ENCODE measurements at regions of chr21 and their contacts with region 1.

Region 1: DNA sequence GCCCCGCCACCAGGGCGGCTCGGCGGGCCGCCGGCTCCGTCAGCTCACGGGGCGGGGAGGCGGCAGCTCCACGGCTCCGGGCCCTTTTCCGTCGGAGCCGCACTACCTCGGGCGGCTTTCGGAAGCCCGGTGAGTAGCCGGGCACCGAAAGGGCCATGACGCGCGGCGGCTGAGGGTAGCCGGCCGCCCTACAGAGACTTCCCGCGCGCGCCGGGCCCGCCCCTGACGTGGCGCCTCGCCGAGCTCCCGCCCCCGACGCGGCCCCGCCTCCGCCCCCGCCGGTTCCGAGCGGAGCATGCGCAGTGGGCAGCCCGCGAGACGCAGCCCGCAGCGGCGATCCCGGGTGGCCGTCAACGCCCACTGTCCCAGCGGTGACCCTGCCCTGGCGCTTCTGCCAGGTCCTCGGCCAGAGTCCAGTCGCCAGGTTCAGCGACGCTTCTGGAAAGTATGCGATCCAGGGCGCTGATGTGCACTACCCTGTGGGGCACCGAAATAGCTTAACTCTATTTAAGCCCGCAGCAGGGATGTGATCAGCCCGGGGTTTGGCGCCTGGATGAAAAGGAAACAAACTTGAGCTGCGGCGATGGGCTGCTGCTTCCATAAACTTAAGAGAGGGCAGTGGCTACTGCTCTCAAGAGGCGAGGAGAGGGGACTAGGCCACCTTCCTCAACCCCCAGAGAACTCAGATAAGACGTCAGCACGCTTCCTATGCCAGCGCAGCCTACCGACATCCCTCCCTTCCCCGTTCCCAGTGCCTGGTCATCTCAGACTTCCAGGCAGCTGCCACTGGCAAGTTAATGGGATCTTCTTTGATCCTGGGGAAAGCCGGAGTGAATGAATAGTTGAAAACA is at the start of gene DONSON:
- DNase-seq: peak; percentile 92 to 93
- ATAC-seq: peak; percentile 94 to 98 (median 95)
- H3K4me3 ChIP-seq: peak within 1 kb of the TSS; percentile 76
- H3K4me3 Mint-ChIP-seq: peak within 1 kb of the TSS; percentile 92
- H3K27ac ChIP-seq: peak within 1 kb of the TSS; percentile 64
- H3K27ac Mint-ChIP-seq: peak within 1 kb of the TSS; percentile 75 to 87
- H3K4me1 ChIP-seq: peaks cover 10% of the 10 kb centered on the region
- H3K4me1 Mint-ChIP-seq: peaks cover 15 to 17% of the 10 kb centered on the region in 2 donors
- H3K27me3 ChIP-seq: no peaks in the 10 kb centered on the region
- H3K27me3 Mint-ChIP-seq: no peaks in the 10 kb centered on the region
- CTCF ChIP-seq: peak; percentile 22
- total RNA-seq, gene DONSON: 17.0 to 18.3 (median 17.3) TPM

Region 2: GRCh38 chr21:33451634-33452071 is 137.1 kb before region 1 on chr21:
- intact Hi-C with region 1: no loop called
- DNase-seq: no peak
- ATAC-seq: no peak
- H3K4me3 ChIP-seq: no peak overlapping the region
- H3K4me3 Mint-ChIP-seq: no peak overlapping the region
- H3K27ac ChIP-seq: no peak overlapping the region
- H3K27ac Mint-ChIP-seq: no peak overlapping the region
- H3K4me1 ChIP-seq: no peaks in the 10 kb centered on the region
- H3K4me1 Mint-ChIP-seq: no peaks in the 10 kb centered on the region
- H3K27me3 ChIP-seq: no peaks in the 10 kb centered on the region
- H3K27me3 Mint-ChIP-seq: no peaks in the 10 kb centered on the region
- CTCF ChIP-seq: no peak

Region 3: DNA sequence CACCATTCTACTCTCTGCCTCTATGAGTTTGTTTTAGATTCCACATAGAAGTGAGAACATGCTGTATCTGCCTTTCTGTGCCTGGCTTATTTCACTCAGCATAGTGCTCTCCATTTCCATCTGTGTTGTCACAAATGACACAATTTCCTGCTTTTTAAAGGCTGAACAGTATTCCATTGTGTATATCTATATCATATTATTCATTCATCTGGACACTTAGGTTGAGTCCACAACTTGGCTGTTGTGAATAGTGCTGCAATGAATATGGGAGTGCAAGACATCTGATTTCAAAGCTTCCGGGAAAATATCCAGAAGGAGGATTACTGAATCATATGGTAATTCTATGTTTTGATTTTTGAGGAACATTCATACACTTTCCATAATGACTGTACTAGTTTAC is 19.8 kb after region 1 on chr21:
- intact Hi-C with region 1: loop called (anchors 2 kb)
- DNase-seq: no peak
- ATAC-seq: no peak
- H3K4me3 ChIP-seq: no peak overlapping the region
- H3K4me3 Mint-ChIP-seq: no peak overlapping the region
- H3K27ac ChIP-seq: no peak overlapping the region
- H3K27ac Mint-ChIP-seq: no peak overlapping the region
- H3K4me1 ChIP-seq: no peaks in the 10 kb centered on the region
- H3K4me1 Mint-ChIP-seq: peaks cover 0 to 5% of the 10 kb centered on the region in 2 donors
- H3K27me3 ChIP-seq: no peaks in the 10 kb centered on the region
- H3K27me3 Mint-ChIP-seq: no peaks in the 10 kb centered on the region
- CTCF ChIP-seq: no peak